CD8-positive, alpha-beta T cell (primary cell): ENCODE measurements at regions of chr6 and their contacts with region 1.

Region 1: GRCh38 chr6:13574149-13574570 is 241 bp upstream of the SIRT5 start:
- DNase-seq: peak; percentile 84 to 98 (median 94)
- ATAC-seq: peak; percentile 84
- H3K4me3 ChIP-seq: peak overlapping the region; percentile 93 to 97
- H3K4me3 Mint-ChIP-seq: peak overlapping the region; percentile 97
- H3K27ac ChIP-seq: peak overlapping the region; percentile 80 to 85
- H3K27ac Mint-ChIP-seq: peak overlapping the region; percentile 97
- H3K4me1 ChIP-seq: peaks cover 4% of the 10 kb centered on the region
- H3K4me1 Mint-ChIP-seq: peaks cover 28% of the 10 kb centered on the region
- H3K27me3 ChIP-seq: no peaks in the 10 kb centered on the region
- H3K27me3 Mint-ChIP-seq: no peaks in the 10 kb centered on the region
- CTCF ChIP-seq: peak; percentile 56

Region 2: GRCh38 chr6:13141387-13141786 is 432.8 kb before region 1 on chr6:
- CTCF ChIA-PET with region 1: no interaction called
- POLR2A ChIA-PET with region 1: no interaction called
- intact Hi-C with region 1: no loop called
- DNase-seq: no peak
- ATAC-seq: no peak
- H3K4me3 ChIP-seq: no peak overlapping the region
- H3K4me3 Mint-ChIP-seq: no peak overlapping the region
- H3K27ac ChIP-seq: no peak overlapping the region
- H3K27ac Mint-ChIP-seq: no peak overlapping the region
- H3K4me1 ChIP-seq: no peaks in the 10 kb centered on the region
- H3K4me1 Mint-ChIP-seq: no peaks in the 10 kb centered on the region
- H3K27me3 ChIP-seq: no peaks in the 10 kb centered on the region
- H3K27me3 Mint-ChIP-seq: peaks cover 2% of the 10 kb centered on the region
- CTCF ChIP-seq: no peak

Region 3: GRCh38 chr6:13336553-13336952 is 237.6 kb before region 1 on chr6:
- CTCF ChIA-PET with region 1: interaction called, 11 read pairs
- POLR2A ChIA-PET with region 1: interaction called, 5 read pairs
- intact Hi-C with region 1: loop called (anchors 1 to 2 kb)
- DNase-seq: peak; percentile 57 to 83 (median 71)
- ATAC-seq: peak; percentile 94
- H3K4me3 ChIP-seq: no peak overlapping the region
- H3K4me3 Mint-ChIP-seq: no peak overlapping the region
- H3K27ac ChIP-seq: no peak overlapping the region
- H3K27ac Mint-ChIP-seq: no peak overlapping the region
- H3K4me1 ChIP-seq: no peaks in the 10 kb centered on the region
- H3K4me1 Mint-ChIP-seq: peaks cover 7% of the 10 kb centered on the region
- H3K27me3 ChIP-seq: no peaks in the 10 kb centered on the region
- H3K27me3 Mint-ChIP-seq: no peaks in the 10 kb centered on the region
- CTCF ChIP-seq: peak; percentile 83

Region 4: GRCh38 chr6:13526727-13527670 is 47.2 kb before region 1 on chr6:
- CTCF ChIA-PET with region 1: interaction called, 4 read pairs
- POLR2A ChIA-PET with region 1: interaction called, 5 read pairs
- intact Hi-C with region 1: loop called in 1 of 2 experiments (anchors 2 kb)
- DNase-seq: peak in 8 of 9 experiments; percentile 19 to 77 (median 50)
- ATAC-seq: peak; percentile 94
- H3K4me3 ChIP-seq: no peak overlapping the region
- H3K4me3 Mint-ChIP-seq: no peak overlapping the region
- H3K27ac ChIP-seq: no peak overlapping the region
- H3K27ac Mint-ChIP-seq: peak overlapping the region; percentile 25
- H3K4me1 ChIP-seq: peaks cover 16% of the 10 kb centered on the region
- H3K4me1 Mint-ChIP-seq: peaks cover 20% of the 10 kb centered on the region
- H3K27me3 ChIP-seq: no peaks in the 10 kb centered on the region
- H3K27me3 Mint-ChIP-seq: no peaks in the 10 kb centered on the region
- CTCF ChIP-seq: no peak

Region 5: DNA sequence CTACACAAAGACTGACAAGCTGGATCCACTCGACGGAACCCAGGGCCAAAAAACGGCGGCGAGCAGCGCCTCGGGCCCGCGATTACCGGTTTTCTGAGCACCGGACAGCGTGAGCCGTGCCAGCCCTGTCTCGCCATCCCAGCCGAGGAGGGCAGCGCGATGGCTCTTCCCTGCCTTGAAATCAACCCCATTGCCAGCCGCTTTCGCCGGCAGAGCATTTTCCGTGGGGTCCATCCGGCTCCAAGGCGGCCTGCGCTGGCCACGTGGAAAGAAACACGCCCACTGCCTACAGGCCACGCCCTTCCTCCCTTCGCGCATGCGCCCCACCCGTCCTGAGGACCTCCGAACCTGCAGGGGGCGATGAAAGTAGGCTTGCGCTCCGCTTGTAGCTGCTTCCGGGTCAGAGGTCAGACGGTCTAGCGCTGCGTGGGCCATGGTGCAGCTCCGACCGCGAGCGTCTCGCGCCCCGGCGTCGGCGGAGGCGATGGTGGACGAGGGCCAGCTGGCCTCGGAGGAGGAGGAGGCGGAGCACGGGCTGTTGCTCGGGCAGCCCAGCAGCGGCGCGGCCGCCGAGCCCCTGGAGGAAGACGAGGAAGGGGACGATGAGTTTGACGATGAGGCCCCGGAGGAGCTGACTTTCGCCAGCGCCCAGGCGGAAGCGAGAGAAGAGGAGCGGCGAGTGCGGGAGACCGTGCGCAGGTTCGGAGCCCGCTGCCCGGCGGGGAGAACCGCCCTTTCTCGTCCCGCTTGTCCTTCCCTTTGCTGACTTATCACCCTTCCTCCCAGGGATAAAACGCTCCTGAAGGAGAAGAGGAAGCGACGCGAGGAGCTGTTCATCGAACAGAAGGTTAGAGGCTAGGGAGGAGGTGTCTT is 41.0 kb after region 1 on chr6 and contains the start of gene NOL7:
- CTCF ChIA-PET with region 1: interaction called, 19 read pairs
- POLR2A ChIA-PET with region 1: interaction called, 36 read pairs
- intact Hi-C with region 1: loop called (anchors 1 kb)
- DNase-seq: peak; percentile 96 to 99 (median 99)
- ATAC-seq: peak; percentile 93
- H3K4me3 ChIP-seq: peak within 1 kb of the TSS; percentile 86 to 97
- H3K4me3 Mint-ChIP-seq: peak within 1 kb of the TSS; percentile 99
- H3K27ac ChIP-seq: peak within 1 kb of the TSS; percentile 83 to 88
- H3K27ac Mint-ChIP-seq: peak within 1 kb of the TSS; percentile 98
- H3K4me1 ChIP-seq: peaks cover 28% of the 10 kb centered on the region
- H3K4me1 Mint-ChIP-seq: peaks cover 39% of the 10 kb centered on the region
- H3K27me3 ChIP-seq: no peaks in the 10 kb centered on the region
- H3K27me3 Mint-ChIP-seq: no peaks in the 10 kb centered on the region
- CTCF ChIP-seq: peak; percentile 94
- total RNA-seq, gene NOL7: 70.5 to 71.1 TPM

Region 6: DNA sequence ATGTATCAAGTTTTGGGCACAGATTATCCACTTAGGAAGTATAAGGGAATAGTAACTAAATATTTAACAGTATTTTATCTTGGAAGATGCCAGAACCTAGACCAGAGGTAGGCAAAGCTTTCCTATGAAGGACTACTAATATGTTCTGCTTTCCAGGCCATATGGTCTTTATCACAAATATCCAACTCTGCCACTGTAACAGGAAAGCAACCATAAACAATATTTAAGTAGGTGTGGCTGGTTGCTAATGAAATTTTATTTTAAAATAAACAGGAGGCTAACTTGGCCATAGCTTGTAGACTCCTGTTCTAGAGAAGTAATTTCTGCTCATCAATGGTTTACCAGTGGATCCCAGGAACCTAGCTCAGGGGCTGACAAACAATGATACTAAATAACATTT is 80.3 kb after region 1 on chr6:
- CTCF ChIA-PET with region 1: no interaction called
- POLR2A ChIA-PET with region 1: no interaction called
- intact Hi-C with region 1: no loop called
- DNase-seq: no peak
- ATAC-seq: no peak
- H3K4me3 ChIP-seq: no peak overlapping the region
- H3K4me3 Mint-ChIP-seq: no peak overlapping the region
- H3K27ac ChIP-seq: no peak overlapping the region
- H3K27ac Mint-ChIP-seq: no peak overlapping the region
- H3K4me1 ChIP-seq: no peaks in the 10 kb centered on the region
- H3K4me1 Mint-ChIP-seq: peaks cover 26% of the 10 kb centered on the region
- H3K27me3 ChIP-seq: no peaks in the 10 kb centered on the region
- H3K27me3 Mint-ChIP-seq: no peaks in the 10 kb centered on the region
- CTCF ChIP-seq: no peak

Region 7: GRCh38 chr6:13795041-13795750 is 221.0 kb after region 1 on chr6:
- CTCF ChIA-PET with region 1: interaction called, 3 read pairs
- POLR2A ChIA-PET with region 1: no interaction called
- intact Hi-C with region 1: loop called (anchors 1 to 2 kb)
- DNase-seq: peak; percentile 64 to 88 (median 81)
- ATAC-seq: peak; percentile 99
- H3K4me3 ChIP-seq: no peak overlapping the region
- H3K4me3 Mint-ChIP-seq: no peak overlapping the region
- H3K27ac ChIP-seq: no peak overlapping the region
- H3K27ac Mint-ChIP-seq: no peak overlapping the region
- H3K4me1 ChIP-seq: no peaks in the 10 kb centered on the region
- H3K4me1 Mint-ChIP-seq: peaks cover 6% of the 10 kb centered on the region
- H3K27me3 ChIP-seq: no peaks in the 10 kb centered on the region
- H3K27me3 Mint-ChIP-seq: no peaks in the 10 kb centered on the region
- CTCF ChIP-seq: peak; percentile 95

Region 8: GRCh38 chr6:14117158-14118090 is 543.3 kb after region 1 on chr6 and contains the start of gene CD83:
- CTCF ChIA-PET with region 1: no interaction called
- POLR2A ChIA-PET with region 1: no interaction called
- intact Hi-C with region 1: loop called (anchors 2 kb)
- DNase-seq: peak; percentile 72 to 97 (median 84)
- ATAC-seq: peak; percentile 94
- H3K4me3 ChIP-seq: peak within 1 kb of the TSS; percentile 90 to 92
- H3K4me3 Mint-ChIP-seq: peak within 1 kb of the TSS; percentile 93
- H3K27ac ChIP-seq: peak within 1 kb of the TSS; percentile 66 to 81
- H3K27ac Mint-ChIP-seq: peak within 1 kb of the TSS; percentile 96
- H3K4me1 ChIP-seq: peaks cover 8% of the 10 kb centered on the region
- H3K4me1 Mint-ChIP-seq: peaks cover 39% of the 10 kb centered on the region
- H3K27me3 ChIP-seq: no peaks in the 10 kb centered on the region
- H3K27me3 Mint-ChIP-seq: no peaks in the 10 kb centered on the region
- CTCF ChIP-seq: no peak
- total RNA-seq, gene CD83: 57.2 to 60.4 TPM